PC-9 (cell line): ENCODE measurements at regions of chr9 and their contacts with region 1.

Region 1: GRCh38 chr9:110744753-110745384 is 76.3 kb downstream of the MUSK start:
- DNase-seq: peak; percentile 72 to 97
- H3K4me3 ChIP-seq: peak overlapping the region; percentile 2; the same call in 1 of the 2 replicates
- H3K27ac ChIP-seq: peak overlapping the region; percentile 87
- H3K4me1 ChIP-seq: peaks cover 48% of the 10 kb centered on the region
- H3K27me3 ChIP-seq: no peaks in the 10 kb centered on the region
- CTCF ChIP-seq: no peak

Region 2: GRCh38 chr9:110382741-110383140 is 362.1 kb before region 1 on chr9:
- CTCF ChIA-PET with region 1: no interaction called
- POLR2A ChIA-PET with region 1: no interaction called
- intact Hi-C with region 1: no loop called
- DNase-seq: no peak
- H3K4me3 ChIP-seq: no peak overlapping the region
- H3K27ac ChIP-seq: no peak overlapping the region
- H3K4me1 ChIP-seq: no peaks in the 10 kb centered on the region
- H3K27me3 ChIP-seq: no peaks in the 10 kb centered on the region
- CTCF ChIP-seq: no peak

Region 3: GRCh38 chr9:110835404-110835803 is 90.5 kb after region 1 on chr9:
- CTCF ChIA-PET with region 1: no interaction called
- POLR2A ChIA-PET with region 1: no interaction called
- intact Hi-C with region 1: loop called (anchors 10 kb)
- DNase-seq: peak in 1 of 2 experiments; percentile 52
- H3K4me3 ChIP-seq: no peak overlapping the region
- H3K27ac ChIP-seq: no peak overlapping the region
- H3K4me1 ChIP-seq: peaks cover 7% of the 10 kb centered on the region; the same call in 1 of the 2 replicates
- H3K27me3 ChIP-seq: no peaks in the 10 kb centered on the region
- CTCF ChIP-seq: no peak

Region 4: DNA sequence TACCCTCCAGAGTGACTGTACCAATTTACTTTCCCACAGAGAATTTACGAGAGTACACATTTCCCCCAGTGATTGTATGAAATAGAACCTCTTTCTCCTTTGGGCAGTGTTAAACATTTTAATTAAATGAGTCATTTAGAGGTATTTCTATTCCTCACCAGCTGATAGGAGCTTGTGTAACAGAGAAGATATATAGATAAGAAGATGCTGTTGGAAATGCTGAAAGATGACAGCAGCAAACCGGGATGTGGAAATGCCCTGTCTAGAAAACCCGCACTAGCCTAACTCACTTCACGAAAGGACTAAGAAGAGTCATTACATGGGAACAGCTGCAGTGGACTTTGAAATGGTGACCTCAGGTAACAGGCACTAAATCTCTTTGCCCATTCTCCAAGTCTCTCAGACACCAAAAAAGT is 225.1 kb after region 1 on chr9:
- CTCF ChIA-PET with region 1: no interaction called
- POLR2A ChIA-PET with region 1: no interaction called
- intact Hi-C with region 1: loop called (anchors 5 kb)
- DNase-seq: peak; percentile 39 to 93
- H3K4me3 ChIP-seq: no peak overlapping the region
- H3K27ac ChIP-seq: peak overlapping the region; percentile 56
- H3K4me1 ChIP-seq: peaks cover 17% of the 10 kb centered on the region
- H3K27me3 ChIP-seq: no peaks in the 10 kb centered on the region
- CTCF ChIP-seq: no peak

Region 5: GRCh38 chr9:111037381-111038305 is 292.8 kb after region 1 on chr9:
- CTCF ChIA-PET with region 1: no interaction called
- POLR2A ChIA-PET with region 1: no interaction called
- intact Hi-C with region 1: loop called (anchors 5 kb)
- DNase-seq: peak in 1 of 2 experiments; percentile 57
- H3K4me3 ChIP-seq: peak overlapping the region; percentile 74
- H3K27ac ChIP-seq: peak overlapping the region; percentile 3; the same call in 1 of the 2 replicates
- H3K4me1 ChIP-seq: peaks cover 16% of the 10 kb centered on the region
- H3K27me3 ChIP-seq: no peaks in the 10 kb centered on the region
- CTCF ChIP-seq: no peak; the same call in 1 of the 2 replicates